ENCODE measurements at regions of chr7 and their contacts with region 1.

Region 1: DNA sequence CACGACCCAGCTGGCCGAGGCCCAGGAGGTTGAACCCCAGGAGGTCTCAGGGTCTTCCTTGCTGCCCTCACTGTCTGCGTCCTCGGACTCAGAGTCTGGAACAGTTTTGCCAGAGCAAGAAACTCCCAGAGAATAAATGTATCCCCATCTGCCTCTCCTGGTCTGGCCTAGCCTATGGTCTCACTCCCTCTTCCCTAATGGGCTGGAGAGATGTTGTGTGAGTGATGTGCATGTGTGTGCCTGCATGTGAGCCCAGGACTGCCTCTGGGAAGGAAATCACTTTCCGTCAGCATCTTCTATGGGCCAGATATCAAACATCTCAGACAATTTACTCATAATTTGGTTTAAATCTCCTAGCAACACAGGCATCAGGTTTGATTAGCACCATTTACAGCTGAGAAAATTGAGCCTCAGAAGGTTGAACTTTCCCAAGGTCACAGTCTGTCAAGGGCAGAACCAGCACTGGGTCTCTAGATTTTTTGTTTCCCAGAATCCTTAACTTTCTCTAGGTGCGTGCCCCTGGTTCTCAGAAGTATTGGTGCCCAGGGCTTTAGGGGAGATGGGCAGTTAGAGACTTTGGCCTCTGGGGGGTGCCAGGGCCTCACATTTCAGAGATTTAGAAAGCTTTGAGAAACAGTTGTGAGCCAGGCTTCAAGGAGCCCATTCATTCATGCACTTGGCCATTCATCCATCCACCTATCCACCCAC is 4.9 kb downstream of the TMEM270 start:
- DNase-seq: no peak
- ATAC-seq: peak; percentile 53 to 70 (median 62)
- H3K4me3 ChIP-seq: no peak overlapping the region
- H3K27ac ChIP-seq: no peak overlapping the region
- H3K4me1 ChIP-seq: peaks cover 0 to 14% (median 5%) of the 10 kb centered on the region in 4 donors
- H3K27me3 ChIP-seq: no peaks in the 10 kb centered on the region
- CTCF ChIP-seq: peak; percentile 70 to 74 (median 71)
- POLR2A ChIP-seq: no peak

Region 2: GRCh38 chr7:73809467-73809951 is 56.4 kb before region 1 on chr7:
- intact Hi-C with region 1: loop called in 1 of 2 experiments (anchors 5 kb)
- DNase-seq: no peak
- ATAC-seq: no peak
- H3K4me3 ChIP-seq: no peak overlapping the region
- H3K27ac ChIP-seq: no peak overlapping the region
- H3K4me1 ChIP-seq: no peaks in the 10 kb centered on the region
- H3K27me3 ChIP-seq: no peaks in the 10 kb centered on the region
- CTCF ChIP-seq: no peak
- POLR2A ChIP-seq: no peak

Region 3: DNA sequence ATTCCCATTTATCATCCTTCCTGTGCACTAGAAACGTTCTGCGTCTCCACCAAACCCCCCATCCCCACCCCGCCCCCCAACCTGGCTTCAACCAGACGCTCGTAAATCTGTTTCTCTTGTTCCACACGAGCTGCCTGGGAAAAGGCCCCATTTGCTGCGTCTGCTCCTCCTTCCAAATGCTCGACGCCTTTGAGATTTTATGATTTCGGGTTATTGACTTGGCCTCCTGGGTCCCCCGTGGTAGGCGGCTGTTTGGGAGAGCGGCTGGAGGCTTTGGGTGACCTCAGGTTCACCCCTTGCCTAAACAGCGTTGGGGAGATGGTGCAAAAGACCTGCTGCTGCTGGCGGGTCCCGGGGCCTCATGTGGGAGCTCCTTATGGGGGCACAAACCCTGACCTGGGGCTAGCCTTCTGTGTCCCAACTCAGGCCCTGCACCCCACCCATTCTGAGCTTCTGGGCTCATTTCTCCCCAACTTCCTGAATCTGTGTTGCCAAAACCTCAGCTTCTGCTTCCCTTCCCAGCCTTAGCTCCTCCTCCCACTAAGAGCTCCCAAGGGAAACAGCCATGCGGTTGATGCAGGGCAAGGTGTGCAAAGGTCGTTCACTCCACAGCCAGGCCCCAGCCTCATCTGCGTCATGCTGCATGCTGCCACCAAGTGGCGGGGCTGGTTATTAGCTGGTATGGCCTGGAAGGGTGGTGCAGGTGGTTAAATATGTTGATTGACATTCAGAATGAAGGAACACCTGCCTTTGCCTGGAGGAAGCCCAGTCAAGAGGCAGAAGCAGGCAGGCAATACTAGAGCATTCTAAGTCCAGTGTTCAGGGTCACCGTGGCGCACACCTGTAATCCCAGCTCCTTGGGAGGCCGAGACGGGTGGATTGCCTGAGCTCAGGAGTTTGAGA is 113.0 kb after region 1 on chr7:
- intact Hi-C with region 1: loop called (anchors 5 to 10 kb)
- DNase-seq: peak; percentile 85 to 89 (median 89)
- ATAC-seq: peak; percentile 98 to 100 (median 98)
- H3K4me3 ChIP-seq: no peak overlapping the region
- H3K27ac ChIP-seq: peak overlapping the region in 1 of 3 donors; percentile 13
- H3K4me1 ChIP-seq: peaks cover 0 to 9% (median 2%) of the 10 kb centered on the region in 4 donors
- H3K27me3 ChIP-seq: no peaks in the 10 kb centered on the region
- CTCF ChIP-seq: peak; percentile 67 to 82 (median 80)
- POLR2A ChIP-seq: no peak

Region 4: GRCh38 chr7:74026903-74027551 is 161.1 kb after region 1 on chr7:
- intact Hi-C with region 1: loop called (anchors 5 kb)
- DNase-seq: peak; percentile 72 to 77 (median 76)
- ATAC-seq: peak; percentile 75 to 86 (median 78)
- H3K4me3 ChIP-seq: no peak overlapping the region
- H3K27ac ChIP-seq: no peak overlapping the region
- H3K4me1 ChIP-seq: peaks cover 0 to 8% (median 2%) of the 10 kb centered on the region in 4 donors
- H3K27me3 ChIP-seq: no peaks in the 10 kb centered on the region
- CTCF ChIP-seq: peak; percentile 85 to 91 (median 86)
- POLR2A ChIP-seq: no peak